ENCODE measurements at regions of chr6 and their contacts with region 1.

Region 1: DNA sequence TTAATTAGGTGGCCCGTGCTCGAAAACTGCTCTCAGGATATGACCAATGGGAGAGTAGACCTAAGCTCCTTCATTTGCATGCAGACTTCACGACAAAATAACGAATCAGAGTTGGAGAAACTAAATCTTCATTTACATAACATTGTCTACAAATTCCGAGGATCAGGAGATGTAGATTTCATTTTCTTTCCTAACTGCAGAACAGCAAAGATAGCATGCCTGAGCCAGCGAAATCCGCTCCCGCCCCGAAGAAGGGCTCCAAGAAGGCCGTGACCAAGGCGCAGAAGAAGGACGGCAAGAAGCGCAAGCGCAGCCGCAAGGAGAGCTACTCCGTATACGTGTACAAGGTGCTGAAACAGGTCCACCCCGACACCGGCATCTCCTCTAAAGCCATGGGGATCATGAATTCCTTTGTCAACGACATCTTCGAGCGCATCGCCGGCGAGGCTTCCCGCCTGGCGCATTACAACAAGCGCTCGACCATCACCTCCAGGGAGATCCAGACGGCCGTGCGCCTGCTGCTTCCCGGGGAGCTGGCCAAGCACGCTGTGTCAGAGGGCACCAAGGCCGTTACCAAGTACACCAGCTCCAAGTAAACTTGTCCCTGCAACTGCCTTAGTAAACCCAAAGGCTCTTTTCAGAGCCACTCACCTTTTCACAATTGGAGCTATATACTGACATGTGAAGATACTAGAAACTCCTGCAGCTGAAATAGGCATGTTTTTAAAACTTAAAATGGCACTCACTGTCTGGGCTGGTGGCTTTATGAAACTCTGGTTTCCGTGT is 96.5 kb downstream of the HFE start:
- DNase-seq: peak; percentile 60
- ATAC-seq: peak; percentile 86
- H3K4me3 Mint-ChIP-seq: peak overlapping the region; percentile 98
- H3K27ac Mint-ChIP-seq: peak overlapping the region; percentile 91
- H3K4me1 Mint-ChIP-seq: peaks cover 30% of the 10 kb centered on the region
- H3K27me3 Mint-ChIP-seq: no peaks in the 10 kb centered on the region
- CTCF ChIP-seq: no peak

Region 2: GRCh38 chr6:26054857-26055669 is 128.7 kb before region 1 on chr6:
- CTCF ChIA-PET with region 1: no interaction called
- POLR2A ChIA-PET with region 1: interaction called, 19 read pairs
- intact Hi-C with region 1: no loop called
- DNase-seq: peak; percentile 63
- ATAC-seq: peak; percentile 65
- H3K4me3 Mint-ChIP-seq: peak overlapping the region; percentile 97
- H3K27ac Mint-ChIP-seq: peak overlapping the region; percentile 100
- H3K4me1 Mint-ChIP-seq: peaks cover 20% of the 10 kb centered on the region
- H3K27me3 Mint-ChIP-seq: no peaks in the 10 kb centered on the region
- CTCF ChIP-seq: no peak

Region 3: GRCh38 chr6:26223650-26224546 is 40.1 kb after region 1 on chr6:
- CTCF ChIA-PET with region 1: no interaction called
- POLR2A ChIA-PET with region 1: interaction called, 19 read pairs
- intact Hi-C with region 1: no loop called
- DNase-seq: no peak
- ATAC-seq: peak; percentile 87
- H3K4me3 Mint-ChIP-seq: no peak overlapping the region
- H3K27ac Mint-ChIP-seq: no peak overlapping the region
- H3K4me1 Mint-ChIP-seq: peaks cover 4% of the 10 kb centered on the region
- H3K27me3 Mint-ChIP-seq: no peaks in the 10 kb centered on the region
- CTCF ChIP-seq: no peak

Region 4: DNA sequence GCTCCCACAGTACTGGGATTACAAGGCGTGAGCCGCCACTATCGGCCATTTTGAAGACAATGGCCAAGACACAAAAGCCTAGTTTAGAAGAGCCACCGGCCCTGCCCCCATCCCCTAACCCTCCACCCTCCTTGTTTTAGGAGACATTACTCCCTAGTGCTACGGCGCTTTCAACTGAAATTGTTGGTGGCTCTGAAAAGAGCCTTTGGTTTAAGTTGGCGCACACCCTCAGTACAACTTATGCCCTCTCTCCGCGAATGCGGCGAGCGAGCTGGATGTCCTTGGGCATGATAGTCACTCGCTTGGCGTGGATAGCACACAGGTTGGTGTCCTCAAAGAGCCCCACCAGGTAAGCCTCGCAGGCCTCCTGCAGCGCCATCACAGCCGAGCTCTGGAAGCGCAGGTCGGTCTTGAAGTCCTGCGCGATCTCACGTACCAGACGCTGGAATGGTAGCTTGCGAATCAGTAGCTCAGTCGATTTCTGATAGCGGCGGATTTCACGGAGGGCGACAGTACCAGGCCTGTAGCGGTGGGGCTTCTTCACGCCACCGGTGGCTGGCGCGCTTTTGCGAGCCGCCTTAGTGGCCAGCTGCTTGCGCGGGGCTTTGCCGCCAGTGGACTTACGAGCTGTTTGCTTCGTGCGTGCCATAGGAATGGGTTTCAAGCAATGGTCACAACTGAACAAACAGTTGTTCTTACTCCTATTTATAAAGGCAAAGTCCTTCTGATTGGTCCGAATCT is 66.4 kb after region 1 on chr6:
- CTCF ChIA-PET with region 1: interaction called, 3 read pairs
- POLR2A ChIA-PET with region 1: interaction called, 26 read pairs
- intact Hi-C with region 1: no loop called
- DNase-seq: peak; percentile 57
- ATAC-seq: peak; percentile 63
- H3K4me3 Mint-ChIP-seq: peak overlapping the region; percentile 94
- H3K27ac Mint-ChIP-seq: peak overlapping the region; percentile 90
- H3K4me1 Mint-ChIP-seq: peaks cover 36% of the 10 kb centered on the region
- H3K27me3 Mint-ChIP-seq: no peaks in the 10 kb centered on the region
- CTCF ChIP-seq: no peak

Region 5: GRCh38 chr6:27825025-27825793 is 1641.4 kb after region 1 on chr6:
- CTCF ChIA-PET with region 1: no interaction called
- POLR2A ChIA-PET with region 1: interaction called, 10 read pairs
- intact Hi-C with region 1: no loop called
- DNase-seq: no peak
- ATAC-seq: no peak
- H3K4me3 Mint-ChIP-seq: peak overlapping the region; percentile 96
- H3K27ac Mint-ChIP-seq: peak overlapping the region; percentile 99
- H3K4me1 Mint-ChIP-seq: peaks cover 31% of the 10 kb centered on the region
- H3K27me3 Mint-ChIP-seq: no peaks in the 10 kb centered on the region
- CTCF ChIP-seq: no peak